GM13977 (cell line): ENCODE measurements at regions of chr16 and their contacts with region 1.

Region 1: GRCh38 chr16:1119766-1120576 is 23.9 kb upstream of the C1QTNF8 start:
- DNase-seq: no peak
- CTCF ChIP-seq: no peak

Region 2: DNA sequence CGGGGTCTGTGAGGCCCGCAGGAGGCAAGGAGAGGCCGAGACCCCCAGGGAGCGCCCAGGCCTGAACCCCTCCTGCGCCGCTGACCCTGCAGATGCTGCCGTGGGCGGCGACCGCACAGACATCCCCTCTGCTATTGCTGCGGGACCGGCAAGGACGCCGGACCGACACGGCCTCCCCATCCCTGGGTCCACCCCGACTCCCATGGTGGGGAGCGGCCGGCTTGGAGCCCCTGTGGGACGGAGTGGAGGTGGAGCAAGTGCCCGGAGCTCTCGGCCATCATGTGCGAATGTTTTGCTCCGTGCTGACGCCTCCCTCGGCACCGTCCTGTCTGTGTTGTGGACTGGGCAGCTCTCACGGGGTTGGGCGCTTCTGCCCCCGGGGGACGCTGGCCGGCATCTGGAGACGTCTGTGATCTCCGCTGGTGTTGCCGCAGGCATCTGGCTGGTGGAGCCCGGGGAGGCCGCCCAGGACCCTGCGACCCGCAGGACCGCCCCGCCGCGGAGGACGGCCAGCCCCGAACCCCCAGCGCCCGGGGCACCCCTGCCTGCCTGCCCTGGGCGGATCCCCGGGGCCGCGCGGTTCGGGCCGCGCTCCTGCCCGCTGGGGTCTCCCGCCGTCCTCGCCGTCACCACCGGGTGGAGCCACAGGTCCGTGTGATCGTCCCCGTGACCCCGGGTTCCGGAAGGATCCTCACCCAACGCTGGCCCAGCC is 306.6 kb before region 1 on chr16:
- in situ Hi-C with region 1: loop called (anchors 10 kb)
- DNase-seq: peak; percentile 82
- CTCF ChIP-seq: peak; percentile 79